ENCODE measurements at regions of chr3 and their contacts with region 1.

Region 1: DNA sequence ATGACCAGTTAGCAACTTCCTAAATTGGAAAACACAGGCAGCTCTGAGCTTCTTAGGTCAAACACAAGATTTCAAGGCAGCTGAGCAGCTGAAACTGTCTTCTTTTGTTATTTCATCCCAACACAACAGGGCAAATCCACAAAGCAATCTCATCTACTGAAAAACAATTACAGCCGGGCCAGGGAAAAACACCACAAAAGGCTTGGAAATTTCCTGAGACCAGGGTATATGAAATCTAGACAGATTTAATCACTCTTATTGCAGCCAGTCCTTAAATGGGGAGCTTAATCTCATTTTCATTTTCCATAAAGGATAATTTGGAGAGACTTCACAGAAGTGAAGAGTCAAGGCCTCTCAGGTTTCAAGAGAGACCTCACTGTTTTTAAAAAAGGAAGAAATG is 181.8 kb downstream of the SSR3 start:
- H3K4me3 Mint-ChIP-seq: no peak overlapping the region
- H3K27ac Mint-ChIP-seq: no peak overlapping the region
- H3K4me1 Mint-ChIP-seq: no peaks in the 10 kb centered on the region
- H3K27me3 Mint-ChIP-seq: peaks cover 6% of the 10 kb centered on the region

Region 2: DNA sequence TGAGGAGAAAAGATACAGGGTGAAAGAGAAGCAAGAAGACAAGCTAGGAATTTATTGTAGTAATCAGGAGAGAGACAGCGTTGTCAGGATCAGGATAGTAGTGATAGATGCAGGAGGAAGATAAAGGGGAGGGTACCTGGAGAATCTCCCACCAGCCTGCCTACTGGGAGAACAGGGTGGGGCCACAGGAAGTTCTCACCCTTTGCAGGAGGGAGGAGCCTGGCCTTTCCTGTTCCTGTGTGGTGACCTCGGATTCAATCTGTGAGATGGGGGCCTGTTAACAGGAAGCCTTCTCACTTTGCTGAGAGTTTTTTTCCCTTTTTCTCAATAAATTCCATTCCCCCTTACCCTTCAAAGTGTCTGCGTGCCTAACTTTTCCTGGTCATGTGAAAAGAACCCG is 465.0 kb before region 1 on chr3:
- intact Hi-C with region 1: no loop called
- H3K4me3 Mint-ChIP-seq: no peak overlapping the region
- H3K27ac Mint-ChIP-seq: peak overlapping the region; percentile 15
- H3K4me1 Mint-ChIP-seq: peaks cover 16% of the 10 kb centered on the region
- H3K27me3 Mint-ChIP-seq: no peaks in the 10 kb centered on the region

Region 3: DNA sequence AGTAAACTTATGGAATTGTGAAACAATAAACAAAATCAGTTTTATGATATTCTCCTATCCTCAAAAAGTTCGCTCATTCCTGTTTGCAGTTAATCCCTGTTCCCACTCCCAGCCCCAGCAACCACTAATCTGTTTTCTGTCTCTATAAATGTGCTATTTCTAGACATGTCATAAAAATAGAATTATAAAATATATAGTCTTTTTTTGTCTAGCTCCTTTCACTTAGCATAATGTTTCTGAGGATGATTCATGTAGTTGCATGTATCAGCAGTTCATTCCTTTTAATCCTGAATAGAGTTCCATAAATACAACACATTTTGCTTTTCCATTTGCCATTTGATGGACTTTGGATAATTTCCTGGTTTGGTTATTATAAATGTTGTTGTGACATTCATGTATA is 112.8 kb before region 1 on chr3:
- intact Hi-C with region 1: loop called (anchors 10 kb)
- H3K4me3 Mint-ChIP-seq: no peak overlapping the region
- H3K27ac Mint-ChIP-seq: no peak overlapping the region
- H3K4me1 Mint-ChIP-seq: no peaks in the 10 kb centered on the region
- H3K27me3 Mint-ChIP-seq: peaks cover 1% of the 10 kb centered on the region

Region 4: GRCh38 chr3:156576651-156577343 is 203.7 kb after region 1 on chr3:
- intact Hi-C with region 1: no loop called
- H3K4me3 Mint-ChIP-seq: no peak overlapping the region
- H3K27ac Mint-ChIP-seq: peak overlapping the region; percentile 63
- H3K4me1 Mint-ChIP-seq: peaks cover 48% of the 10 kb centered on the region
- H3K27me3 Mint-ChIP-seq: no peaks in the 10 kb centered on the region

Measured in dendritic cell treated with granulocyte-macrophage colony-stimulating factor and Interleukin-4, amounts not matched to agents 40 ng/mL and 50 ng/mL, for 4 days (primary cell).